Astrocyte of the cerebellum (primary cell): ENCODE measurements at regions of chr11 and their contacts with region 1.

Region 1: GRCh38 chr11:73429121-73429750 is 53.0 kb downstream of the RELT start:
- DNase-seq: peak; percentile 33
- H3K4me3 ChIP-seq: no peak overlapping the region
- CTCF ChIP-seq: no peak

Region 2: DNA sequence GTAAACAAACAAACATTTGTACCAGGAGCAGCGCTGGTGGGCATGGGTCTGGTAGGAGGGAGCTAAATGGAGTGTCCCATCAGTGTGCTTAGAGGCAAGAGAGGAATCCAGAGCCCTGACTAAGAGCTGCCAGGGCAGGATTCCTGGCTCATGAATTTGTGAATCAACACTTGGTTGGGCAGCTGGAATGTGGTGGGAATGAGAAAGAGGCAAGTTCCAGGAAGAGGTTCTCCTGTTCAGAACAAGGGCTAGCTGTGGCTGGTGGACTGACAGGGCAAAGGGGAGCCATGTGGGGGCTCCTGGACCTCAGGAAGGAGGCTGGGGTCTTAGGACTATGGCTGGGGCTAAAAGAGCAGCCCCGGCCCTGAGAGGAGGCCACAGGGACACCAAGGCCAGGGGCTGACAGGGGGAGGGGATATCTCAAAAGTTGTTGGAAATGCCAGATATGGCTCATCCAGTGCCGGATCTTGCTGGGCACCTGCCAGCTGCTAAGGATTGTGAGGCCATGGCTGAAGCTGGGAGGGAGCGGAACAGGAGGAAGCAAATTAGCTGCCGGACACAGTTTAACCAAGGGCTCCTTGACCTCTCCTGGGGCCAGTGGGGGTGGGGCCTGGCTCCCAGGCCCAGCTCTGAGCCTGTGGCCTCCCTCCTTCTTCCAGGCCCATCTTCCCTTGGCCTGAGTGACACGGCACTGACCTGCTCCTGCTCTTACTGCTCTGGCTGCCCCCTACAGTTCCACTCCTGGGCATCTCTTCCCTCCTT is 171.7 kb before region 1 on chr11:
- in situ Hi-C with region 1: no loop called
- DNase-seq: peak; percentile 95
- H3K4me3 ChIP-seq: no peak overlapping the region
- CTCF ChIP-seq: no peak

Region 3: GRCh38 chr11:73384872-73385689 is 44.2 kb before region 1 on chr11:
- in situ Hi-C with region 1: no loop called
- DNase-seq: no peak
- H3K4me3 ChIP-seq: no peak overlapping the region
- CTCF ChIP-seq: no peak

Region 4: GRCh38 chr11:73395295-73396208 is 33.7 kb before region 1 on chr11:
- in situ Hi-C with region 1: no loop called
- DNase-seq: no peak
- H3K4me3 ChIP-seq: no peak overlapping the region
- CTCF ChIP-seq: no peak

Region 5: DNA sequence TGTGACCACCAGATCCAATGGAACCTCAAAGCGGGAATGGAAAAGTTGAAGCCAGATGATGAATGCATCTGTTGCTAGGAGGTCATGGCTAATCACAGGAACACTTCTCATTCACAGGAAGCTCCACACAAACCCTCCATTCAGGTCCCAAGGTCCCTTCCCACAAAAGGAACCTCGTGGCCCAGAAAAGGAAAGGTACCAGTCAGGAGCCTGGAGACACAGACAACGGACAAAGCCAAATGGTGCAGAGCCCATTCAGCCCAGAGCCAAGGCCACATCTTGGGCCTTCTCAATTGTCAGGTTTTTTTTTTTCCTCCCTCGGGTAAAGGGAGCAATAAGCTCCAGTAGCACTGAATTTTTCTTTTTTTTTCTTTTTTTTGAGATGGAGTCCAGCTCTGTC is 81.6 kb after region 1 on chr11:
- in situ Hi-C with region 1: loop called (anchors 10 kb)
- DNase-seq: no peak
- H3K4me3 ChIP-seq: no peak overlapping the region
- CTCF ChIP-seq: no peak